Dorsolateral prefrontal cortex (tissue), 120 donors: ENCODE measurements at regions of chr7 and their contacts with region 1.

Region 1: DNA sequence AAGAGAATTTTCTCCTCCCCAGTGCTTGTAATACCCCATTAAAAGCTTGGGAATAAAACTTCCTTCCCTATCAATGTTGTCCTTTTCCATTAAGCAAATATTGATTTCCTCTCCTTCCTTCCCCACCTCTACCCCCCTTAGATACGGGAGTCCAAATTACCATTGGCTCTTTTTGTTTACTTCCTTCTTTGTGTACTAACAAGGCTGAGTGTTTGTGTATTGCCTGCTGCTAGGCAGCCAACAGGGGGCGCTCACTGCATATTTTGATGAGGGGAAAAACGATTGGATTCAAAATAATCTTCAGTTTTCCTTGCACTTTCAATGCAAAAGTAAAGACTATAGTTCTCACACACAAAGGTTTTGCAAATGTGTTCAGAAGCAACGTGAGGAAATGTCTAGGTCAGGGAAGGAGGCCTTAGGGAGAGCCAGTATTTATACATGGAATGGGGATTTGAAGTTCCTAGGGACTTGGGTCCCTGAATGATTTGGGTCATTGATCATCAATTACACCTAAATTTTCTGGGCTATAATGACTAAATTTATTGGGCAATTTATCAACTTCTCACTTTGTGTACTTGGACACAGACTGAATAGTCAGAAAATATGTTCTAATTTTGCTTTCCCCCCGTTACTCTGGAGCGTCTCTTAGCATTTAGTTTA is 23.6 kb upstream of the VPS41 start:
- DNase-seq: peak in 9 of 10 donors; percentile 14 to 70 (median 56)
- H3K4me3 ChIP-seq: peak overlapping the region in 11 of 59 donors; percentile 1 to 22 (median 15)
- H3K27ac ChIP-seq: peak overlapping the region in 6 of 59 donors; percentile 7 to 43 (median 24)
- H3K27me3 ChIP-seq: no peaks in the 10 kb centered on the region
- CTCF ChIP-seq: peak; percentile 64 to 93 (median 86)

Region 2: DNA sequence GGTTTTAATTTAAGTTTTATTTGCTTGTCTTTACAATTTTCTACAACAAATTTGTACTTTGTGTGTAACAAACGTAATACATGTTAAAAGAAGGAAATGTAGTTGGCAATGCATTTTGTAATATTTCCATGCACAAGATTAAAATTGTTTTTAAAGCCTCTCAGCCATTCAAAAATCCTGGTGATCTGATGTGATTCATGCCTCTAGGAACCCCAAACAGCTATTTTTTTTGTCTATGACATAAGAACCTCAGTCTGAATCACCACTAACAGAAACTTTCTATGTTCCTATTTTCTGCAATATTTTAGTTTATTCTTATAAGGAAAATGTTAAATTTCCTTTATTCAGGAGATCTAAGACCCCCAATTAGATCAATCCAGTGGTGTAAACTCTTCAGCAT is 450.5 kb after region 1 on chr7:
- intact Hi-C with region 1: no loop called
- DNase-seq: no peak
- H3K4me3 ChIP-seq: no peak overlapping the region
- H3K27ac ChIP-seq: no peak overlapping the region
- H3K27me3 ChIP-seq: peaks cover 0 to 4% (median 0%) of the 10 kb centered on the region in 45 donors
- CTCF ChIP-seq: no peak

Region 3: GRCh38 chr7:39510864-39511354 is 578.3 kb after region 1 on chr7:
- intact Hi-C with region 1: loop called in 1 of 2 experiments (anchors 10 kb)
- DNase-seq: no peak
- H3K4me3 ChIP-seq: no peak overlapping the region
- H3K27ac ChIP-seq: no peak overlapping the region
- H3K27me3 ChIP-seq: no peaks in the 10 kb centered on the region
- CTCF ChIP-seq: no peak